ENCODE measurements at regions of chr9 and their contacts with region 1.

Region 1: GRCh38 chr9:99819856-99820684 is 1.6 kb upstream of the NR4A3 start:
- DNase-seq: peak; percentile 80 to 96 (median 92)

Region 2: DNA sequence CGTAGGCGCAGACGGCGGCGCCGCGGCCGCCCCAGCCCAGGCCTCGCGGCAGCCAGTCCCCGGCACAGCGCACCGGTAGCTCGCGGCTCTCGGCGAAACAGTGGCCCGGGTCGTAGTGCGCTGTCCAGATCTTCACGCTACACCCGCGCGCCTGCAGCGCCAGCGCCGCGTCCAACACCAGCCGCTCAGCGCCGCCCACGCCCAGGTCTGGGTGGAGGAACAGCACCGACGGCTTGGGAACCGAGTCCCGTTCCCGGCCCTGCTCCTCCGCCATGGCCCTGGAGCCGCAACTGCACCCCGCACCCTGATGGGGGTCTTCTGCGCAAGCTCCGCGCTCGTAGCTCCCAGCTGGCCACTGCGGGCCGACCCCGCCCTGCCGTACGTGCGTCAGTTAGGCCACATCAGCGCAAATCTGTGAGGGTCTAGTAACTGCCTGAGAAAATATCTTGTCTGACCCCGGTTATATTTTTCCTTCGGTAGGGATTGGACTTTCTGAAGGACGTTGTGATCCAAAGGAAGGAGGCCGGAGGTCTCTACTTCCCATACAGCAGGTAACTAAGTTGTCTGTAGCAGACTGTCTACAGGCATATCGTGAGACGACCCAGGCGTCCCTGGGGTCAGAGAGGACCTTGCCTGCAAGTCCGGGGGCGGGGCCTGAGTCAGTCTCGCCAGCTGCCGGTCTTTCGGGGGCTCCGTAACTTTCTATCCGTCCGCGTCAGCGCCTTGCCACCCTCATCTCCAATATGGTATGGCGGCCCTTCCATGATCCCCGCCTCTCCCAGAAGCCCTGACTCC is 598.3 kb before region 1 on chr9 and contains the starts of genes ALG2 and SEC61B:
- intact Hi-C with region 1: loop called (anchors 2 kb)
- DNase-seq: peak; percentile 90 to 98 (median 96)

Region 3: DNA sequence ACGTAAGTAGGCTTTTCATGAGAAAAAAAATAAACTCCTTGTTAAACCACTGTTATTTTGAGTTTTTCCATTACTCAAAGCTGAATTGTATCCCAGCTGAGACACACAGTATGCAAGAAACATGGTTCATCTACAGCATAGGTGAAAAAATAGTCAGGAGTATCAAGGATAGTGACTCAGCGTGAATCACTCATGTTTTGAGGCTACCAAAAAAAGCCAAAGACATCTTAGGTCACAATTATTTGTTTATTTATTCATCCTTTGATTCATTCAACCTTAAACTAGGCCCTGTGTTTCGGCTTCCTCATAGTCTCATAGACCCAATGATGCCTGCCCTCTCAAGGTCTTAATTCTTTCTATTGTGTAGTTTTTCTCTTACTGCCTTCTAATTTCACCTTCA is 53.5 kb after region 1 on chr9:
- intact Hi-C with region 1: no loop called
- DNase-seq: no peak

Region 4: GRCh38 chr9:99906403-99907207 is 86.5 kb after region 1 on chr9 and contains the start of gene STX17:
- intact Hi-C with region 1: loop called (anchors 5 kb)
- DNase-seq: peak; percentile 54 to 94 (median 86)

Measured in head of caudate nucleus (tissue), 42 donors.